ENCODE measurements at regions of chr14 and their contacts with region 1.

Region 1: GRCh38 chr14:49585803-49586672 is at the start of gene RPS29:
- DNase-seq: peak; percentile 97 to 98
- ATAC-seq: peak; percentile 99
- H3K4me3 ChIP-seq: peak within 1 kb of the TSS; percentile 78 to 99 (median 93)
- H3K27ac ChIP-seq: peak within 1 kb of the TSS; percentile 94 to 98 (median 96)
- H3K4me1 ChIP-seq: peaks cover 27 to 29% of the 10 kb centered on the region in 2 donors
- H3K27me3 ChIP-seq: no peaks in the 10 kb centered on the region
- CTCF ChIP-seq: no peak
- POLR2A ChIP-seq: peak; percentile 94 to 96
- total RNA-seq, gene RPS29: 6,799 to 10,395 (median 8,793) TPM

Region 2: GRCh38 chr14:49598485-49599300 is 12.7 kb after region 1 on chr14 and contains the start of gene LRR1:
- in situ Hi-C with region 1: no loop called
- intact Hi-C with region 1: loop called (anchors 1 kb)
- DNase-seq: peak; percentile 62 to 71
- ATAC-seq: peak; percentile 90 to 94
- H3K4me3 ChIP-seq: peak within 1 kb of the TSS; percentile 81 to 92 (median 84)
- H3K27ac ChIP-seq: peak within 1 kb of the TSS; percentile 92 to 95 (median 92)
- H3K4me1 ChIP-seq: peaks cover 9% of the 10 kb centered on the region in 2 donors
- H3K27me3 ChIP-seq: no peaks in the 10 kb centered on the region
- CTCF ChIP-seq: peak in 1 of 5 experiments; percentile 8
- POLR2A ChIP-seq: peak; percentile 23 to 24
- total RNA-seq, gene LRR1: 1.3 to 5.8 (median 3.7) TPM

Region 3: DNA sequence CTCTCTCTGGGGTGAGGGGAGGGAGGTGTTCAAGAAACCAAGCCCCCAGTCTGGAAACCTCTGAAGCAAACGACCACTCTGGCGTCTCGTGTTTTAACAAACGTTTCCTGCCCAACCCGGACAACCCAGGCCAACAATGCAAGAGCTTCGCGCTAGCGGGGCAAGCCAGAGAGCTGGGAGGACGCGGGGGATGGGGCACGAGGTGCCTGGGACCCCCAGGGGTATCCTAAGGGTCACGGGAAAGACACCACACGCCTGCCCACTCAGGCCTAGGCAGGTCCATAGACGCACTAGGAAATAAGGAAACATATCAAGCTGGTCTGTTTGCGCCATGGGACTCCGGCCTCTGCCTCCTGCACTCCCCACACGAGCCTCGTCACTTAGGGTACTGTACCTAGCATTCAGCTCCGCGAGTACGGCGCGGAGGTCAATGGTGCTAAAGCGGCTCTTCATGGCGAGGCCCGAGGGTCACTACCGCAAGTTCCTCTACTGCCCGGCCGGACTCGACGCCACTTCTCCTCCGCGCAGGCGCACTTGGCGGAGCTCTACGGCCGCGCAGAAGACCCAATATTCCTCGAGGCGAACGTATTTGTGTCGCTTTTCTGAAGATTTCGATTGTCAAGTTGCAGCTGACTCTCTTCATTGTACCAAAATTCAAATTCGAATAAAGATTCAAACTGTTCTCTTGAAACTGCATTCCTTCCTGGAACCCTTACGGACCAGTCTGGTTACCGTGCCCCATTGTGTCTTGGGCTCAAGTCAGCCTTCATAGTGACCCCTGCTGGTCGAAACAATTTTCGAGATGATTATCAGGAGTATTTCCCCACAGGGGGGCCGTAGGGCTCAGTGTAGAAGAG is 266.5 kb after region 1 on chr14 and contains the start of gene NEMF:
- in situ Hi-C with region 1: no loop called
- intact Hi-C with region 1: loop called (anchors 5 kb)
- DNase-seq: peak; percentile 71 to 83
- ATAC-seq: peak; percentile 81
- H3K4me3 ChIP-seq: peak within 1 kb of the TSS; percentile 78 to 95 (median 86)
- H3K27ac ChIP-seq: peak within 1 kb of the TSS; percentile 92 to 98 (median 96)
- H3K4me1 ChIP-seq: peaks cover 37 to 39% of the 10 kb centered on the region in 2 donors
- H3K27me3 ChIP-seq: no peaks in the 10 kb centered on the region
- CTCF ChIP-seq: peak; percentile 76 to 92 (median 78)
- POLR2A ChIP-seq: peak; percentile 79 to 82
- total RNA-seq, gene NEMF: 56.5 to 71.1 (median 65.2) TPM

Region 4: DNA sequence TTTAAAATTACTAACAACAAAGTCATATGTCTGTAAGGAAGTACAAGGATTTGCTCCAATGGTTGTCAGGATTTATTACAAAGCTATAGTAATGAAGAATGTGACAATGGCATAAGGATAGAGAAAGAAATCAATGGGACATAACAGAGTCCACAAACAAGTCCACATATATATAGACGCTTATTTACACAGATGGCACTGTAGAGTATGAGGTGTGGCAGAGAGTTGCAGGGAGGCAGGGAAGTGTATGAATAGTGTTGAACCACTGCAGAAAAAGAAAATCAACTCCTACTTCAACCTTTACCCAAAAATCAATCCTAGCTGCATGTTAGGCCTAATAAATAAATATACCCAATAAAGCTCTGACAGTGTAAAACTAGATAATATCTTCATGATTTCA is 624.0 kb after region 1 on chr14:
- in situ Hi-C with region 1: no loop called
- intact Hi-C with region 1: no loop called
- DNase-seq: no peak
- ATAC-seq: no peak
- H3K4me3 ChIP-seq: no peak overlapping the region
- H3K27ac ChIP-seq: no peak overlapping the region
- H3K4me1 ChIP-seq: peaks cover 24 to 31% of the 10 kb centered on the region in 2 donors
- H3K27me3 ChIP-seq: no peaks in the 10 kb centered on the region
- CTCF ChIP-seq: no peak
- POLR2A ChIP-seq: no peak